PC-3 (cell line): ENCODE measurements at regions of chr3 and their contacts with region 1.

Region 1: DNA sequence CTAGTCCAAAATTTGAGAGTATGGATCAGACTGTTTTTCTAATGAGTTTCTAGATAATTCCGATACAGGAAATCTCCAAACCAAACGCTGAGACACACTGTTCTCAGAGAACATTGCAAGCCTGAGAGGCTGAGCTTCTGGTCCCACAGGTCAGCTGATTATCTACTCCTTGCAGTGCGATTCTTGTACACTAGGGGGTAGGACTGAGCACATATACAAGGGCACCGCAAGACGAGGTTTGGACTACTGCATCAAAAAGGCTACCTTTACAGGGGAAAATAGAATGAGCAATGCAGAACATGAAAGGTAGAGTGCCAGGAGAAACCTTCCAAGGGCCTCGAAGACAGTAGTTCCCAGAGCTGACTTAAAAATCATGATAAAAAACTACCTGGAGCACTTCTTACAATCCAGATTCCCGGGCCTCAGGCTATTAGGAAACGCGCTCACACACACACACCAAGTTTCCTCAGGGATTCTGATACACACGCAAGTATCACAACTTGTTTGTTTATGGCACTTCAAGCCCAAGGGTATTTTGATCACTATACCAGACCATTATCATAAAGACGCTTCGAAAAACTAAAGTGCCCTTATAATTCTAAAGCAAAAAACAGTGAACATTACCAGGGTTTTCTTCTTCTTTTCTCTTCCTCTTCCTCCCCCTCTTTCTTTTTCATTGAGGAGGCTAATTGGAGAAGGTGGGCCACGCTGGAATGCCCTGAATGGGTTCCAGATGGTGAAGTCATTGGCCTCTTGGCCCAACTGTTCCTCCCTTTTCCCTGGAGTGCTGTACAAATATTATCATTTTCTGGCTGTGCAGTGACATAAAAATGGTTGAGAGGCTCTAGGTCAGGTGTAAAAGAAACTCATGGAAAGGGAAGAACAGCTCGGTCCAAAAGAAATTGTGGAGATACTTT is 61.8 kb downstream of the SLC12A8 start:
- DNase-seq: peak; percentile 71
- ATAC-seq: peak; percentile 57
- H3K4me3 ChIP-seq: no peak overlapping the region
- H3K27ac ChIP-seq: no peak overlapping the region
- H3K4me1 ChIP-seq: no peaks in the 10 kb centered on the region
- H3K27me3 ChIP-seq: no peaks in the 10 kb centered on the region
- CTCF ChIP-seq: peak; percentile 70

Region 2: DNA sequence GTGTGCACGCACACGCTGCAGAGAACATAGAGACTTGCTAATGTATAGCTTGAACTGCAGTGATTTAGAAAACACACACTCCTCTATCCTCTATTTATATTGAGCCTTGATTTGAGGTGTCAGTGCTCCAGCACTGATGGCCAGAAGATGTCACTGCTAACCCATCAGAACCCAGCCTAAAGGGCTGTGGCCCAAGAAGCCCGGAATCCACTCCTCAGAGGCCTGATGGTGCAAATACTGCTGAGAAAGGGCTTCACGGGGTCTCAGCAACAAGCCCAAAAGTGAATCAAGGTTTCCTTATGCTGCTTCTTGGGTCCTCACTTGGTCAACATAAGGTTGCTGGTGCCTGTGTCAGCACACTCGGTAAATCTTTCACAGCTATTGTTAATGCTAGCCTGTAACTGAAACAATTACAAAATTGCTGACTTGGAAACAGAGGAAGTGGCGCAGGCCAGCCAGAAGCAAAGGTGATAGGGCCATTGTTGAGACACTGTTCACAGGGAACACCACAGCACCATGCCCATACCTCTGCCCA is 155.3 kb before region 1 on chr3:
- CTCF ChIA-PET with region 1: interaction called, 4 read pairs
- POLR2A ChIA-PET with region 1: no interaction called
- intact Hi-C with region 1: loop called (anchors 1 kb)
- DNase-seq: peak; percentile 75
- ATAC-seq: peak; percentile 98
- H3K4me3 ChIP-seq: no peak overlapping the region
- H3K27ac ChIP-seq: no peak overlapping the region
- H3K4me1 ChIP-seq: peaks cover 8% of the 10 kb centered on the region; the same call in 1 of the 2 replicates
- H3K27me3 ChIP-seq: no peaks in the 10 kb centered on the region
- CTCF ChIP-seq: peak; percentile 83

Region 3: GRCh38 chr3:125437631-125438435 is 287.1 kb after region 1 on chr3:
- CTCF ChIA-PET with region 1: no interaction called
- POLR2A ChIA-PET with region 1: no interaction called
- intact Hi-C with region 1: loop called (anchors 1 kb)
- DNase-seq: peak; percentile 61
- ATAC-seq: peak; percentile 27; the same call in 1 of the 2 replicates
- H3K4me3 ChIP-seq: no peak overlapping the region
- H3K27ac ChIP-seq: no peak overlapping the region
- H3K4me1 ChIP-seq: peaks cover 14% of the 10 kb centered on the region
- H3K27me3 ChIP-seq: no peaks in the 10 kb centered on the region
- CTCF ChIP-seq: peak; percentile 89

Region 4: DNA sequence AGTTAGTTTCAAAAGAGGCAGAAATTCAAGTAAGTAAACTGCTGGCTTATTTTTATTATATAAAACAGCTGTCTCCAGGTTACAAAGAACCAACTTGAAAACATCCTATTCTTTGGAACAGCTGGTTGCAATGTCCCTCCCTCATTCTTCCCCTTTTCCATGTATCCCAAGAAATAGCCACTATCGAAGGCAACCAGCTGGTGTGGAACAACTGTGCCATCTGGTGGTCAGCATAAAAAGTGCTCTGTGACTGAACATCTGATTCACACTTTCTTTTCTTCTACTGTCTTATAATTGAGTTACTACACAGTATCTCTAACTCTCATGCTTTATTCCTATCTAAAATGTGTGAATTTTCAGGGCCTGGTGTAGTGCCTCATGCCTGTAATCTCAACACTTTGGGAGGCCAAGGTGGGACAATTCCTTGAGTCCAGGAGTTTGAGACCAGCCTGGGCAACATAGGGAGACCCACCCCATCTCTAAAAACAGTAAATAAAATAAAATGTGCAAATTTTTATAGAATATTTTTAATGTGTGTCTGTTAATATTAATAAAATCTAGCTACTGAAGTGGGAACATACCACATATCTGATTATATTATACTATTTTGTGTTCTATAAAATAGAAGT is 434.9 kb after region 1 on chr3:
- CTCF ChIA-PET with region 1: no interaction called
- POLR2A ChIA-PET with region 1: no interaction called
- intact Hi-C with region 1: loop called (anchors 10 kb)
- DNase-seq: peak; percentile 64
- ATAC-seq: peak; percentile 67
- H3K4me3 ChIP-seq: no peak overlapping the region
- H3K27ac ChIP-seq: no peak overlapping the region
- H3K4me1 ChIP-seq: no peaks in the 10 kb centered on the region; the same call in 1 of the 2 replicates
- H3K27me3 ChIP-seq: no peaks in the 10 kb centered on the region
- CTCF ChIP-seq: peak; percentile 78